HepG2 (cell line): ENCODE measurements at regions of chr10 and their contacts with region 1.

Region 1: GRCh38 chr10:86102446-86102845 is 264.1 kb downstream of the GRID1 start:
- DNase-seq: no peak
- ATAC-seq: no peak
- H3K4me3 ChIP-seq: no peak overlapping the region
- H3K27ac ChIP-seq: no peak overlapping the region
- H3K4me1 ChIP-seq: no peaks in the 10 kb centered on the region
- H3K27me3 ChIP-seq: no peaks in the 10 kb centered on the region
- CTCF ChIP-seq: no peak
- EP300 ChIP-seq: no peak
- POLR2A ChIP-seq: no peak
- RAD21 ChIP-seq: no peak

Region 2: DNA sequence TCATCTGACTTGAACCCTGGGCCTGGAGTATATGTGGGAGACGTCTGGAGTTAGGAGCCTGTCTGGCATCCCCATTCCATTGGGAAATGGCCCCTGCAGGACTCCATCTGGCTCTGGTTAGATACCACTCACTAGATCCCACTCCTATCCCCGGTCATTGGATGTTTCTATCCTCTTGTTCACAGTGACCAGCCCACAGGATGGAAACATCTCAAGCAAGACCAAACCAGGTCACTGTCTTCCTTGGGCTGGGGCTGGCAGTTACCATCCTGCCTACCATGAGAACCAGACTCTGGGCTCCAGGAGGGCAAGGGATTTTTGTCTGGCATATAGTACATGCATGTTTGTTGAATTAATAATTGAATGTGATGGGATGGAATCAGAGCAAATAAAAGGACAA is 151.5 kb before region 1 on chr10:
- CTCF ChIA-PET with region 1: no interaction called
- POLR2A ChIA-PET with region 1: no interaction called
- in situ Hi-C with region 1: no loop called
- intact Hi-C with region 1: no loop called
- DNase-seq: no peak
- ATAC-seq: no peak
- H3K4me3 ChIP-seq: no peak overlapping the region
- H3K27ac ChIP-seq: no peak overlapping the region
- H3K4me1 ChIP-seq: no peaks in the 10 kb centered on the region
- H3K27me3 ChIP-seq: no peaks in the 10 kb centered on the region; a peak in 1 of 5 replicates
- CTCF ChIP-seq: no peak
- EP300 ChIP-seq: no peak
- POLR2A ChIP-seq: no peak
- RAD21 ChIP-seq: no peak

Region 3: GRCh38 chr10:86117051-86117450 is 14.6 kb after region 1 on chr10:
- CTCF ChIA-PET with region 1: no interaction called
- POLR2A ChIA-PET with region 1: no interaction called
- in situ Hi-C with region 1: no loop called
- intact Hi-C with region 1: loop called (anchors 1 kb)
- DNase-seq: no peak
- ATAC-seq: no peak
- H3K4me3 ChIP-seq: no peak overlapping the region
- H3K27ac ChIP-seq: no peak overlapping the region
- H3K4me1 ChIP-seq: no peaks in the 10 kb centered on the region
- H3K27me3 ChIP-seq: peaks cover 2 to 6% of the 10 kb centered on the region in 2 experiments; a peak in 2 of 5 replicates
- CTCF ChIP-seq: no peak
- EP300 ChIP-seq: no peak
- POLR2A ChIP-seq: no peak
- RAD21 ChIP-seq: no peak

Region 4: DNA sequence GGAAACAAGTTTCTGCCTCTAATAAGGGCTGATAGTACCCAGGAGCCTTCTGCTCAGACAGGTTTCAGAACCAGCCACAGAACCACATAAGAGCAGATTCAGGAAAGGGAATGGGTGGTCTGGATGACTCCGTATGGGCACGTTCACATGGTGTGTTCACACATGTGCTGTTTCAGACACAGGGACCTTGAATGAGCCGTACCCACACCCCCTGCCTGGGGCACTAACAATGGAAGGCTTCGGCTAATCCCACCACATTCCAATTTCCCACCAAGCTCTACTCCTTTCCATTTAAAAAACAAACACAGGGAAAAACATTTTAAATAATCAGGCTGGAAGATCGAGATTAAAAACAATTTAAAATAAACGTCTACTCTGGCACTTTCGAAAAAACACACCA is 46.8 kb after region 1 on chr10:
- CTCF ChIA-PET with region 1: no interaction called
- POLR2A ChIA-PET with region 1: no interaction called
- in situ Hi-C with region 1: no loop called
- intact Hi-C with region 1: no loop called
- DNase-seq: no peak
- ATAC-seq: no peak
- H3K4me3 ChIP-seq: no peak overlapping the region
- H3K27ac ChIP-seq: no peak overlapping the region
- H3K4me1 ChIP-seq: no peaks in the 10 kb centered on the region
- H3K27me3 ChIP-seq: peaks cover 0 to 1% of the 10 kb centered on the region in 2 experiments; a peak in 2 of 5 replicates
- CTCF ChIP-seq: no peak
- EP300 ChIP-seq: no peak
- POLR2A ChIP-seq: no peak
- RAD21 ChIP-seq: no peak

Region 5: DNA sequence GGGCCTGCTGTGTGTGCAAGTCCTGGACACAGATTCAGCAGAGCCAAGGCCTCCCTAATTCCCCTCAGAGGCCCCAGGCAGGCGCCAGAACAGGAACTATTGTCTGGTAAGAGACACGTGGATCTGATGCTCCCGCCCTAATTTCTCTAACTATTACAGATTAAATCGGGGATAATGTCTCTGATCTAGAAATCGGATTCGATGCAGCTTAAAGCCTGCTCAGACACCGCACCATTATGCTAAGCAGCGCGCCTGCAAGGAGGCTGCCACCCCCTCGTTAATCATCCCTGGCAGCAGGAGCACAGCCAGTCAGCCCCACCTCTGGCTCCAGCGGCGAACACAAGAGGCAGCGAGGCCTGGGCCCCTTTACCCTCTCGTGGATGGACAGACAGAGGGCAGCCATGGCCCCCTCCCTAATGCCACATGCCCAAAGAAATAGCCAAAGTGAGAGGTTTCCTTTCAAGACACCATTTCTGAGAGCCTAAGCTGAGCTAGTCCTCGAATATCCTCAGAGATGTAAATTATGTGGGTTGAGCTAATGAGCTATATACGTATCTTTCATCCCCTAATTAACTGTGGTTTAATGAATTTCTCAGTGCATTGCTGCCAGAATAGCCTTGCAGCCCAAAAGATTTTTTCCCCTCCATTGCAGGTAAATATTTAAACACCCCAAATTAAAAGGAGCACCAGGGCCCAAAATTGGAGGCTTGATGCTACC is 142.0 kb after region 1 on chr10:
- CTCF ChIA-PET with region 1: no interaction called
- POLR2A ChIA-PET with region 1: no interaction called
- in situ Hi-C with region 1: no loop called
- intact Hi-C with region 1: no loop called
- DNase-seq: no peak
- ATAC-seq: no peak
- H3K4me3 ChIP-seq: no peak overlapping the region
- H3K27ac ChIP-seq: no peak overlapping the region
- H3K4me1 ChIP-seq: no peaks in the 10 kb centered on the region
- H3K27me3 ChIP-seq: no peaks in the 10 kb centered on the region; a peak in 1 of 5 replicates
- CTCF ChIP-seq: no peak
- EP300 ChIP-seq: no peak
- POLR2A ChIP-seq: no peak
- RAD21 ChIP-seq: no peak